H1 (cell line): ENCODE measurements at regions of chr11 and their contacts with region 1.

Region 1: GRCh38 chr11:124673333-124674167 is at the starts of genes SIAE and SPA17:
- DNase-seq: peak; percentile 86 to 96
- H3K4me3 ChIP-seq: peak within 1 kb of the TSS; percentile 71 to 90 (median 79)
- H3K27ac ChIP-seq: no peak within 1 kb of the TSS
- H3K4me1 ChIP-seq: no peaks in the 10 kb centered on the region; a peak in 1 of 7 replicates
- H3K27me3 ChIP-seq: peaks cover 0 to 15% (median 5%) of the 10 kb centered on the region in 4 experiments; a peak in 6 of 7 replicates
- CTCF ChIP-seq: no peak
- EP300 ChIP-seq: peak in 1 of 2 experiments; percentile 82; a peak in 1 of 3 replicates
- POLR2A ChIP-seq: peak in 1 of 2 experiments; percentile 80; a peak in 2 of 3 replicates
- RAD21 ChIP-seq: no peak
- total RNA-seq, gene SIAE: 1.7 and 2.3 TPM in 2 replicates
- total RNA-seq, gene SPA17: 4.2 and 5.2 TPM in 2 replicates

Region 2: DNA sequence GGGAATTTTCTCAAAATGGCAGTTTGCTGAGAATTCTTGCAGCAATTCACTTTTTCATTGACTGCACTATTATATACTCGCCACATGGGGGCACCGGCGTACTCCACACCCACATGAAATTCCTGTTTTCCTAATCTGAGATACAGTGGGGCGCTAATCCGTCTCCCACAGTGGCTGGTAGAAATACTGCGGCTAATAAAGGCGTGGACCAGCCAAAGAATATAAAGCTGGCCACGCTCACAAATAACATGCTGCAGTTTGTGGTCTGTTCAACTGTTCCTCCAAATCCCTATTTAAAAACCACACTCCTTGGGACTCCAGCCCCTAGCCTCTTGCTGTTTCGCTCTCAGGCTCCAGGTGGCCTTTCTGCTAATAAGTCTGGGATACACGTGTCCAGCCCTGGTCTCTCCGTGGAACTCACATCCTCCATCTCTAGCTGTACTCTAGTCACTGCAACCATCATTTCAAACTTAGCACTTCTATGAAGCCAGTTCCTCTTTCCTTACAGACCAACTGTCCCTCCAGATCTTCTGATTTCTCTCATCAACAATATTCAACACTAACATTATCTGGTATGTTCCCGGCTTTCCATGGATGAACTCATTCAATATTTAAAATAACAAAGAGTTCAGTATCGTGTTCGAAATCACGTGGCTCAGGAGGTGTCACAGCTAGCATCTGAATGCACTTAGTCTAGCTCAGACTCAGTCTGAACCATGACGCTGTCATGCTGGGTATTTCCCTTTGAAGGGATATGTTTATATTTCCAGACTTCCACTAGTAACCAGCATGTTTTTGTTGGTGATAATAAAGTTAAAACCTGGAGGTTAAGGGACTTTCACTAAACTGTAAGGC is 28.9 kb before region 1 on chr11:
- CTCF ChIA-PET with region 1: interaction called, 16 read pairs
- POLR2A ChIA-PET with region 1: no interaction called
- DNase-seq: peak in 1 of 2 experiments; percentile 68
- H3K4me3 ChIP-seq: peak overlapping the region in 1 of 4 experiments; percentile 37; a peak in 2 of 8 replicates
- H3K27ac ChIP-seq: no peak overlapping the region
- H3K4me1 ChIP-seq: peaks cover 0 to 4% (median 2%) of the 10 kb centered on the region in 4 experiments; a peak in 3 of 7 replicates
- H3K27me3 ChIP-seq: no peaks in the 10 kb centered on the region
- CTCF ChIP-seq: peak; percentile 38 to 87 (median 75)
- EP300 ChIP-seq: no peak
- POLR2A ChIP-seq: no peak
- RAD21 ChIP-seq: peak; percentile 85

Region 3: DNA sequence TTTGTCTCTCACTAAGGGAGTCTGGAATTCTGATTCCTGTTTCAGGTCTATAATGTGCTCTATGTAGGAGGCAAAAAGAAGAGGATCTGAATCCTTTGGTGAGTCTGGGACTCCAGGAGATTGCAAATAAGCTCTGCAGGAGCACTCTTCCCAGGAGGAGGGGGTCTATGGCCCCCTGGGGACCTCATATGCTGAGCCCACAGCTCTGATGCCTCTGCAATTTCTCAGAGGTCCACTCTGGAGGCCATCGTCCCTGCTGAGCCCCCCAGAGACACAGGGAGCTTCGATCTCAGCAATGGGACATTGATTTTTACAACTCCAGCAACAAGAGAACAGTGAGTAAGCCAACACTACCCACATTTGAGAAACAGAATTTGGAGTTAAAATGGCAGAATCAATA is 46.0 kb after region 1 on chr11:
- CTCF ChIA-PET with region 1: interaction called, 10 read pairs
- POLR2A ChIA-PET with region 1: interaction called, 5 read pairs
- DNase-seq: no peak
- H3K4me3 ChIP-seq: no peak overlapping the region
- H3K27ac ChIP-seq: no peak overlapping the region
- H3K4me1 ChIP-seq: peaks cover 0 to 5% (median 3%) of the 10 kb centered on the region in 4 experiments; a peak in 5 of 7 replicates
- H3K27me3 ChIP-seq: peaks cover 47 to 92% (median 81%) of the 10 kb centered on the region in 4 experiments
- CTCF ChIP-seq: no peak
- EP300 ChIP-seq: no peak
- POLR2A ChIP-seq: no peak
- RAD21 ChIP-seq: no peak

Region 4: DNA sequence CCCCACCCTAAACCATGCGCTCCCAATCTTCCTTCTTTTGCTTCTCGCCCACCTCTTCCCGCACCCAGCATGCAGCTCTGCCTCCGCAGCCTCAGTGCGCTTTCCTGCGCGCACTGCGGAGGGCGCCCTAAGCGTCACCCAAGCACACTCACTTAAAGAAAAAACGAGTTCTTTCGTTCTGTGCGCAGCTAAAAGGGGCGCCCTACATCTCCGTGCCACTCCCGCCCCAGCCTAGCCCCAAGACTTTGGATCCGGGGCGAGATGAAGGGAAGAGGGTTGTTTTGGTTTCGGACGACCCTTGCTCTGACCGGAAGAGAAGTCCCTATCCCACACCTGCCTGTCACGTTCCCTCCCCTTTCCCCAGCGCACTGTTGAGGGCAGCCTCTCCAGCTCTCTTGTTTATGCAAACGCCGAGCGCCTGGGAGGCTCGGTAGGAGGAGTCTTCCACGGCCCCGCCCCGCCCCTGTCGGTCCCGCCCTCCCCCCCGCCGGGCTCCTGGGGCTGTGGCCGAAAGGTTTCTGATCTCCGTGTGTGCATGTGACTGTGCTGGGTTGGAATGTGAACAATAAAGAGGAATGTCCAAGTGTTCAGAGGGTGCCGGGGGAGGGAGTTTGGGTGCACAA is 73.2 kb after region 1 on chr11:
- CTCF ChIA-PET with region 1: interaction called, 30 read pairs
- POLR2A ChIA-PET with region 1: interaction called, 7 read pairs
- DNase-seq: peak; percentile 77 to 88
- H3K4me3 ChIP-seq: peak overlapping the region; percentile 72 to 83 (median 77)
- H3K27ac ChIP-seq: no peak overlapping the region
- H3K4me1 ChIP-seq: peaks cover 0 to 19% (median 16%) of the 10 kb centered on the region in 4 experiments; a peak in 6 of 7 replicates
- H3K27me3 ChIP-seq: peaks cover 92 to 99% (median 97%) of the 10 kb centered on the region in 4 experiments
- CTCF ChIP-seq: peak; percentile 39 to 73 (median 71); a peak in 3 of 4 replicates
- EP300 ChIP-seq: no peak
- POLR2A ChIP-seq: no peak
- RAD21 ChIP-seq: peak; percentile 29 to 36; a peak in 2 of 4 replicates

Region 5: GRCh38 chr11:124769801-124770639 is 96.5 kb after region 1 on chr11:
- CTCF ChIA-PET with region 1: interaction called, 56 read pairs
- POLR2A ChIA-PET with region 1: interaction called, 3 read pairs
- DNase-seq: no peak
- H3K4me3 ChIP-seq: no peak overlapping the region
- H3K27ac ChIP-seq: no peak overlapping the region
- H3K4me1 ChIP-seq: no peaks in the 10 kb centered on the region
- H3K27me3 ChIP-seq: no peaks in the 10 kb centered on the region
- CTCF ChIP-seq: no peak
- EP300 ChIP-seq: no peak
- POLR2A ChIP-seq: no peak
- RAD21 ChIP-seq: no peak

Region 6: GRCh38 chr11:124778281-124778680 is 104.7 kb after region 1 on chr11:
- CTCF ChIA-PET with region 1: interaction called, 18 read pairs
- POLR2A ChIA-PET with region 1: no interaction called
- DNase-seq: no peak
- H3K4me3 ChIP-seq: no peak overlapping the region
- H3K27ac ChIP-seq: no peak overlapping the region
- H3K4me1 ChIP-seq: no peaks in the 10 kb centered on the region
- H3K27me3 ChIP-seq: no peaks in the 10 kb centered on the region
- CTCF ChIP-seq: peak in 2 of 3 experiments; percentile 44 to 63; a peak in 3 of 4 replicates
- EP300 ChIP-seq: no peak
- POLR2A ChIP-seq: no peak
- RAD21 ChIP-seq: peak; percentile 29 to 33; a peak in 3 of 4 replicates

Region 7: DNA sequence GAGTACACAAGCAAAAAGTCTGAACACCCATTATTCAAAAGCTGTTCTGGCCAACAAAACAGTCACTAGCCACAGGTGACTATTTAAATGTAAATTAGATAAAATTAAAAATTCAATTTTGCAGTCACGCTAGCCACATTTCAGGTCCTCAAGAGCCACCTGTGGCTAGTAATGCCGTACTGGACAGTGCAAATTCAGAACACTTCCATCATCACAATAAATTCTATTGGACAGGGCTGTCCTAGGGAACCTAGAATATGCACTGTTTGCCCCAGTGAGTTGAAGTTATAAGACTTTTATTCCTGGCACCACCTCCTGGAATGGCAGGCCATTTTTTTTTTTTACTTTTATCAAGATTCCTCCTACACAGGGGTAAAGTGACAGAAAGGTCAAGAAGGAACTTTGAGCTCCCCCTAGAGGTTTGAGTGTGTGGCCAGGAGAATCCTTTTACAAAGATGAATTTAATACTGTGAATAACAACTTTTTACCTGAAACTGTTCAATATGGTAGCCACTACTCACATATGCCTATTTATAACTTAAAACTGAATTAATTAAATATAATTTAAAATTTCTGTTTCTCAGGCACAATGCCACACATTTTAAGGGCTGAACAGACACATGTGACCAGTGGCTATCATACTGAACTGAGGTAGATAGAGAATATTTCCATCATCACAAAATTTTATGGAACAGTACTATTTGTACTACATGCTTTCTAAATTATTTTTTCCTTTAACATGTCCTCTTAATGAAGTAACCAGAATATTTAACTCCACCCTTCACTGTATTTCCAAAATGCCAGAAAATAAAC is 120.1 kb after region 1 on chr11:
- CTCF ChIA-PET with region 1: interaction called, 37 read pairs
- POLR2A ChIA-PET with region 1: interaction called, 3 read pairs
- DNase-seq: no peak
- H3K4me3 ChIP-seq: peak overlapping the region in 1 of 4 experiments; percentile 44; a peak in 1 of 8 replicates
- H3K27ac ChIP-seq: no peak overlapping the region
- H3K4me1 ChIP-seq: peaks cover 3 to 28% (median 7%) of the 10 kb centered on the region in 4 experiments; a peak in 6 of 7 replicates
- H3K27me3 ChIP-seq: no peaks in the 10 kb centered on the region
- CTCF ChIP-seq: peak in 2 of 3 experiments; percentile 43 to 62; a peak in 3 of 4 replicates
- EP300 ChIP-seq: no peak
- POLR2A ChIP-seq: no peak
- RAD21 ChIP-seq: peak; percentile 52 to 54